Stomach (tissue), 19 donors: ENCODE measurements at regions of chr12 and their contacts with region 1.

Region 1: DNA sequence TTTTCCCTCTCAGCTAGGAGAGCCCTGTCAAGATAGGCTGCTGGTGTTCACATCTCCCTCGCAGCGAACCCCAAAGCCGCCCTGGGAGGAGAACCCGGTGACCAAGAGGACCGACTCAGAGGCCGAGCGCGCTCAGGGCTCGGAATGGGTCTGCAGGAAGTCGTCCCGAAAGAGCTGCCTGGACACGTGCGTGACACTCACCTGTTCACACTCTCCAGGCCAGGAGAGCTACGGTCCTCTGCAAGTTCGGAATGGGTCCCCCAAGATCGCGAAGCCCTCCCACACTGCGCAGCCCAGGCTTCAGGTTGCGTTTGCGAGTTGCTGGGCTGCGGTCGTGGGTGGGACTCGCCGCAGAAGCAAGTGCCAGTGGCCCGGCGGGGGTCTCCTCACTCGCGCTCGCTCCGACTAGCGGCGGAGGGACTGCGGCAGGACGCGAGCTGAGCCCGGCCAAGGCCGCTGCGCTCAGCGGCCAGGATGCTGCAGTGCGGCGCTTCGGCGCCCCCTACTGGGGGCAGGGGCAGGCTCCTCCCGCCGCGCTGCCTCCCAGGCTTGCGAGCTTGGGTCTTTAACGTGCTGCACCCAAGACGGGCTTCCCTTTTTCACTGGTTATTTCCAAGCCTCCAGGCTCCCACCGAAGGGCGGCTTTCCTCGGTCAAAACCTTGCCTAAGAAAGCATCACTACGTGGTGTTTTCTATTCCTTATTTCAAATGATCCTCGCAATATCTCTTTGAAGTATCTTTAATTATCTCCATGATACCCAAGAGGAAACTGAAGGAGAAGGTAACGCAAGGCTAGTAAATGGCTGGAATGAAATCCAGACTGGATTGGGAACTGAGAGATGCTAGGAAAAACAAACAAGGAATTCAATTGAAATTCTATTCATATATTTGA is at the start of gene RERG:
- DNase-seq: peak; percentile 84 to 96
- H3K4me3 ChIP-seq: peak within 1 kb of the TSS; percentile 51 to 60 (median 56)
- H3K27ac ChIP-seq: peak within 1 kb of the TSS; percentile 36 to 88 (median 79)
- H3K4me1 ChIP-seq: peaks cover 6 to 29% (median 16%) of the 10 kb centered on the region in 4 donors
- H3K27me3 ChIP-seq: no peaks in the 10 kb centered on the region
- CTCF ChIP-seq: peak in 5 of 7 experiments; percentile 92 to 98 (median 96)
- EP300 ChIP-seq: no peak
- POLR2A ChIP-seq: no peak
- total RNA-seq, gene RERG: 20.3 to 48.7 (median 34.5) TPM in 4 of 5 donors, not detected in the other

Region 2: GRCh38 chr12:14845350-14845750 is 375.9 kb before region 1 on chr12:
- intact Hi-C with region 1: loop called (anchors 5 kb)
- DNase-seq: peak; percentile 50 to 82
- H3K4me3 ChIP-seq: no peak overlapping the region
- H3K27ac ChIP-seq: peak overlapping the region in 1 of 5 donors; percentile 28
- H3K4me1 ChIP-seq: peaks cover 10 to 56% (median 40%) of the 10 kb centered on the region in 4 donors
- H3K27me3 ChIP-seq: no peaks in the 10 kb centered on the region
- CTCF ChIP-seq: peak in 5 of 7 experiments; percentile 65 to 87 (median 77)
- EP300 ChIP-seq: no peak
- POLR2A ChIP-seq: no peak

Region 3: DNA sequence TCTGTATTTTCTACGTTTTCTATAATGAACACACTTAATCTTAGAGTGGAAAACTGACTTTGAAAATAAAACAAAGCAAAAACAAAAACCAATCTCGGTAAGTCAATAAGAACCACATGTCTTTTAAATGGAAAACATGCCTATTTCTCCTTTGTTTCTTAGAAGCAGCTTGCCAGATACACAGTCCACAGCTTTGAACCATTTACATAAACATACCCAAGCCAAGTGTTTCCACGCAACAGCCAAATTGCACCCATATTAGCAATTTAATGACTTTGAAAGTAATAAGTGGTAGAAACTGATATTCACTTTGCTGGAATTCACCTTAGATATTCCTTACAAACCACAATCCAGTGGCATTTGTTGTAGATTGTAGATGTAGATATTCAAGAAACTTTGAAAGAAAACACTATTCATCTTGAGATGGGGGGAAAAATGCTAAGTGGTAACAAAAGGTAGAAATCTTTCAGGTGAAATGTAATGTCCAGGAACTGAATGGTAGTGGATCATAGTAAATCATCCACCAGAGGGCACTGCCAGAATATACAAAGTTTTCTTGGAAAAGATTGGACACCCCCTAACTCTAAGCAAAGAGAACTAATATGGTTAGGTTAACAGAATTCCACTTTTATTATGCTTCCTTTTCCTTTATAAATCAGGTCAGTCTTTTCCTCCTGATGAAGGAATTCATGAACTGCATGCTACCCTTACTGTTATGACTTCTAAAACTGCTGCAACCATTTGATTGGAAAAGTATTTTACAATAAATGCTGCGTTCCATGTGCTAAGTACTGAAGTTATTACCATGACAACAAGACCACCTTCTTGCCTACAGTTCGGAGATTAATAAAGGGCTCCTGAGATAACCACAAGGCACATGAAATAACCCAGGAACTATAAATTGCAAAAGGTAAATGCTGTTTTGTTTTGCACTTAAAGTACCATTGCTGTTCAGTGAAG is 69.8 kb before region 1 on chr12:
- intact Hi-C with region 1: loop called (anchors 5 kb)
- DNase-seq: peak in 1 of 2 donors; percentile 67
- H3K4me3 ChIP-seq: no peak overlapping the region
- H3K27ac ChIP-seq: peak overlapping the region in 4 of 5 donors; percentile 5 to 76 (median 37)
- H3K4me1 ChIP-seq: peaks cover 25 to 74% (median 50%) of the 10 kb centered on the region in 4 donors
- H3K27me3 ChIP-seq: no peaks in the 10 kb centered on the region
- CTCF ChIP-seq: peak in 3 of 7 experiments; percentile 52 to 58 (median 58)
- EP300 ChIP-seq: no peak
- POLR2A ChIP-seq: no peak

Region 4: GRCh38 chr12:15205341-15206010 is 15.8 kb before region 1 on chr12:
- intact Hi-C with region 1: no loop called
- DNase-seq: peak in 1 of 2 donors; percentile 64
- H3K4me3 ChIP-seq: no peak overlapping the region
- H3K27ac ChIP-seq: peak overlapping the region in 4 of 5 donors; percentile 41 to 75 (median 63)
- H3K4me1 ChIP-seq: peaks cover 0 to 29% (median 13%) of the 10 kb centered on the region in 4 donors
- H3K27me3 ChIP-seq: no peaks in the 10 kb centered on the region
- CTCF ChIP-seq: no peak
- EP300 ChIP-seq: no peak
- POLR2A ChIP-seq: no peak

Region 5: DNA sequence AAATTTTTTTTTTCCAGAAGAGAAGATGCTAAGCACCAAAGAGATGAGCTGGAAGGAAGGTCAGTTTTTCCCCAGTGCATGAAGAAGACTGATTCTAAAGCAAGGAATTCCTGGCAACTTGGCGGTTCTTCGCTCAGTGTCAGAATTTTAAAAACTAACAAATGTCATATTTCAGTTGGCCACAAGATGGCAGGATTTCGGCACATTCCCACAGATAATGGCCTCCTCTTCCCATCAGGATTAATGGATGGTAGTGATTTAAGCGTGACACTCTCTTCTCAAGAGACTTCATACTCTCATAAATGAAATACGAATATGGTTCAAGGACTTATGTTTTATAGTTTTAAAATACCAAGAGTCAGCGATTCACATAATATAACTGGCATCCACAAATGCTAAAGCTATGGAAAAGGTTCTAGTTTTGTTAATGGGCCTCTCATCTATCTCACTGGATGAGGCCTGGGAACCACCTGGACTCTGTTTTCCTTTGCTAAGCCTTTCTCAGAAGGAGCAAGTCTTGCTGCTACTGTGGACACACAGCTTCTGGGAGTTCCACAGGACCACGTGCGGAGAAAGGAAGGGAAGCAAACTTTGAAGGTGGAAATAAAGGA is 55.0 kb after region 1 on chr12:
- intact Hi-C with region 1: loop called (anchors 10 kb)
- DNase-seq: peak in 1 of 2 donors; percentile 70
- H3K4me3 ChIP-seq: no peak overlapping the region
- H3K27ac ChIP-seq: no peak overlapping the region
- H3K4me1 ChIP-seq: peaks cover 5 to 50% (median 34%) of the 10 kb centered on the region in 4 donors
- H3K27me3 ChIP-seq: no peaks in the 10 kb centered on the region
- CTCF ChIP-seq: peak in 5 of 7 experiments; percentile 41 to 65 (median 63)
- EP300 ChIP-seq: no peak
- POLR2A ChIP-seq: no peak

Region 6: GRCh38 chr12:15350643-15351042 is 129.4 kb after region 1 on chr12:
- intact Hi-C with region 1: no loop called
- DNase-seq: peak in 1 of 2 donors; percentile 39
- H3K4me3 ChIP-seq: no peak overlapping the region
- H3K27ac ChIP-seq: no peak overlapping the region
- H3K4me1 ChIP-seq: no peaks in the 10 kb centered on the region
- H3K27me3 ChIP-seq: no peaks in the 10 kb centered on the region
- CTCF ChIP-seq: no peak
- EP300 ChIP-seq: no peak
- POLR2A ChIP-seq: no peak

Region 7: GRCh38 chr12:15472036-15472435 is 250.8 kb after region 1 on chr12:
- intact Hi-C with region 1: no loop called
- DNase-seq: no peak
- H3K4me3 ChIP-seq: no peak overlapping the region
- H3K27ac ChIP-seq: no peak overlapping the region
- H3K4me1 ChIP-seq: no peaks in the 10 kb centered on the region
- H3K27me3 ChIP-seq: no peaks in the 10 kb centered on the region
- CTCF ChIP-seq: no peak
- EP300 ChIP-seq: no peak
- POLR2A ChIP-seq: no peak